ENCODE measurements at regions of chr9 and their contacts with region 1.

Region 1: GRCh38 chr9:4574657-4575243 is 84.5 kb downstream of the SLC1A1 start:
- DNase-seq: no peak
- H3K4me3 Mint-ChIP-seq: no peak overlapping the region
- H3K27ac Mint-ChIP-seq: no peak overlapping the region
- H3K4me1 Mint-ChIP-seq: peaks cover 14% of the 10 kb centered on the region
- H3K27me3 Mint-ChIP-seq: no peaks in the 10 kb centered on the region

Region 2: GRCh38 chr9:4588721-4589120 is 14.0 kb after region 1 on chr9:
- CTCF ChIA-PET with region 1: interaction called, 14 read pairs
- POLR2A ChIA-PET with region 1: no interaction called
- DNase-seq: no peak
- H3K4me3 Mint-ChIP-seq: no peak overlapping the region
- H3K27ac Mint-ChIP-seq: no peak overlapping the region
- H3K4me1 Mint-ChIP-seq: peaks cover 2% of the 10 kb centered on the region
- H3K27me3 Mint-ChIP-seq: no peaks in the 10 kb centered on the region

Measured in activated CD4-positive, alpha-beta T cell treated with anti-CD3 and anti-CD28 coated beads, Interleukin-2, amount 10 ng/mL, durations not matched to agents 7 days and 5 days (primary cell).